ENCODE measurements at regions of chr7 and their contacts with region 1.

Region 1: GRCh38 chr7:118352854-118353453 is 128.4 kb downstream of the ANKRD7 start:
- DNase-seq: no peak
- H3K4me3 Mint-ChIP-seq: no peak overlapping the region
- H3K27ac Mint-ChIP-seq: no peak overlapping the region
- H3K4me1 Mint-ChIP-seq: peaks cover 20% of the 10 kb centered on the region
- H3K27me3 Mint-ChIP-seq: no peaks in the 10 kb centered on the region
- CTCF ChIP-seq: peak; percentile 23

Region 2: GRCh38 chr7:118259115-118259514 is 93.8 kb before region 1 on chr7:
- CTCF ChIA-PET with region 1: no interaction called
- intact Hi-C with region 1: loop called (anchors 5 kb)
- DNase-seq: no peak
- H3K4me3 Mint-ChIP-seq: no peak overlapping the region
- H3K27ac Mint-ChIP-seq: no peak overlapping the region
- H3K4me1 Mint-ChIP-seq: no peaks in the 10 kb centered on the region
- H3K27me3 Mint-ChIP-seq: no peaks in the 10 kb centered on the region
- CTCF ChIP-seq: no peak

Region 3: DNA sequence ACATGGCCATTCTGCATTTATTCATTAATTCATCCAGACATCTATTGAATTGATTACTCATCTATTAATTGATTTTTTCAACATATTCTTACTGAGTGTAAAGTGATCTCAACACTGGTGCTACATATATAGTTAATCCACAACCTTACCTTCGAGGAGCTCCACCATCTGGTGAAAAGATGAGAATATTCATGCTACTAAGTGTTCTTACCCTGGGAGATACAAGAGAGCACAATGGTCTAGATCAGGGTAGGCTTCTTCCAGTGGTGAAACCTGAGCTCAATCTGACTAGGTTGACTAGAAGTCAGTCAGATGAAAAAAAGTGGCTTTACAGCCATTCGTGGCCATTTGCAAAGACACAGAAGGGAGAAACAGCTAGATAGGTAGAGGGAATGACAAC is 378.9 kb after region 1 on chr7:
- CTCF ChIA-PET with region 1: no interaction called
- intact Hi-C with region 1: loop called (anchors 10 kb)
- DNase-seq: no peak
- H3K4me3 Mint-ChIP-seq: no peak overlapping the region
- H3K27ac Mint-ChIP-seq: no peak overlapping the region
- H3K4me1 Mint-ChIP-seq: no peaks in the 10 kb centered on the region
- H3K27me3 Mint-ChIP-seq: no peaks in the 10 kb centered on the region
- CTCF ChIP-seq: no peak

Region 4: DNA sequence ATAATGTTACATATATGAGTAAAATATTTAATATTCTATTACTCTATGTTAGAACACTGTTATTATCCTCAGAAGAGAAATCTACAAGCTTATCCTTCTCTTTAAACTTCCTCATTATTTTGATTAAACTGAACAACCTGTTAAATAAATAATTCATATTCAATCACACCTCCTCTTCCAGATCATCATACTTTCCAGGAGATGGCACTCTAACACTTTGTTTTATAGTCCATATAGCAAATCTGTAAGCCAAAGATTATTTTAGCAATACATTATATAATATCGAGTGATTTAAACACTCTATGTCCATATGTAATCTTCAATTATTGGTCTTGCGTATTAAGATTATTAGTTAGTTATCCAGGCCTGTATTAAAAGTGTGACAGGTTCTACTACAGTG is 565.6 kb after region 1 on chr7:
- CTCF ChIA-PET with region 1: no interaction called
- intact Hi-C with region 1: loop called (anchors 2 kb)
- DNase-seq: no peak
- H3K4me3 Mint-ChIP-seq: no peak overlapping the region
- H3K27ac Mint-ChIP-seq: no peak overlapping the region
- H3K4me1 Mint-ChIP-seq: no peaks in the 10 kb centered on the region
- H3K27me3 Mint-ChIP-seq: no peaks in the 10 kb centered on the region
- CTCF ChIP-seq: peak; percentile 26

Measured in Calu3 (cell line).